ENCODE measurements at regions of chr10 and their contacts with region 1.

Region 1: GRCh38 chr10:2885288-2886278 is 181.8 kb upstream of the PFKP start:
- DNase-seq: no peak
- H3K4me3 ChIP-seq: no peak overlapping the region
- H3K27ac ChIP-seq: no peak overlapping the region
- H3K4me1 ChIP-seq: no peaks in the 10 kb centered on the region
- H3K27me3 ChIP-seq: no peaks in the 10 kb centered on the region
- CTCF ChIP-seq: no peak
- EP300 ChIP-seq: no peak
- POLR2A ChIP-seq: no peak
- RAD21 ChIP-seq: no peak

Region 2: GRCh38 chr10:2844925-2845324 is 40.7 kb before region 1 on chr10:
- CTCF ChIA-PET with region 1: no interaction called
- POLR2A ChIA-PET with region 1: no interaction called
- DNase-seq: no peak
- H3K4me3 ChIP-seq: no peak overlapping the region
- H3K27ac ChIP-seq: no peak overlapping the region
- H3K4me1 ChIP-seq: no peaks in the 10 kb centered on the region
- H3K27me3 ChIP-seq: 0 out of 7 replicates have a peak, but pooled peaks cover 0 to 2% (median 0%) of the 10 kb centered on the region in 4 experiments
- CTCF ChIP-seq: no peak
- EP300 ChIP-seq: no peak
- POLR2A ChIP-seq: no peak
- RAD21 ChIP-seq: no peak

Region 3: GRCh38 chr10:2870654-2871053 is 14.9 kb before region 1 on chr10:
- CTCF ChIA-PET with region 1: no interaction called
- POLR2A ChIA-PET with region 1: no interaction called
- DNase-seq: no peak
- H3K4me3 ChIP-seq: no peak overlapping the region
- H3K27ac ChIP-seq: no peak overlapping the region
- H3K4me1 ChIP-seq: peaks cover 0 to 8% (median 3%) of the 10 kb centered on the region in 4 experiments; a peak in 3 of 7 replicates
- H3K27me3 ChIP-seq: no peaks in the 10 kb centered on the region
- CTCF ChIP-seq: no peak
- EP300 ChIP-seq: no peak
- POLR2A ChIP-seq: no peak
- RAD21 ChIP-seq: no peak

Region 4: DNA sequence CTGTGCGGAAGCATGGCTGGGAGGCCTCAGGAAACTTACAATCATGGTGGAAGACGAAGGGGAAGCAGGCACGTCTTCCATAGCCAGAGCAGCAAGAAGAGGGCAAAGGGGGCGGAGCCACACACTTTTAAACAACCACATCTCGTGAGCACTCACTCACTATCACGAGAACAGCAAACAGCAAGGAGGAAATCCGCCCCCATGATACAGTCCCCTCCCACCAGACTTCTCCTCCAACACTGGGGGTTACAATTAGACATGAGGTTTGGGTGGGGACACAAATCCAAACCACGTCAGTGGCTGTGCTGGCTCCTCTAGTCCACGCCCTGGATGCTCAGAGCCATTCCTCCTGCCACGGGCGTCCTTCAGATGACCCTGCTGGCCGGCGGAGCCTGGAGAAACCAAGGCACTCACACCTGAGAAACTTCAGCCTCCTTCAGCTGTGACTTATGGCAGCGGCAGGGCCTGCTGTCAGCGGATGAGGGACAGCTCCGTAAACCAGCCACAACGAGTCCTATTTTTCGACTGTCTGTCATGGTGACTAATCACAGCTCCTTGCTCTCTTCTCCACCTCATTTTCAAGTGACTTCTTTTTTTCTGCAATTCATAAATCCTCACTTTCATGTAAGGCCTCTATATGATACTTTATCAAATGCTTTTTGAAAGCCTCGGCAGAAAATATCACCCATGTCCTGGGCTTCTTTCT is 13.8 kb after region 1 on chr10:
- CTCF ChIA-PET with region 1: interaction called, 14 read pairs
- POLR2A ChIA-PET with region 1: no interaction called
- DNase-seq: peak in 1 of 2 experiments; percentile 30
- H3K4me3 ChIP-seq: no peak overlapping the region
- H3K27ac ChIP-seq: no peak overlapping the region
- H3K4me1 ChIP-seq: peaks cover 0 to 3% (median 0%) of the 10 kb centered on the region in 4 experiments; a peak in 2 of 7 replicates
- H3K27me3 ChIP-seq: no peaks in the 10 kb centered on the region
- CTCF ChIP-seq: no peak
- EP300 ChIP-seq: no peak
- POLR2A ChIP-seq: no peak
- RAD21 ChIP-seq: no peak

Region 5: GRCh38 chr10:2909921-2910320 is 24.3 kb after region 1 on chr10:
- CTCF ChIA-PET with region 1: no interaction called
- POLR2A ChIA-PET with region 1: no interaction called
- DNase-seq: no peak
- H3K4me3 ChIP-seq: no peak overlapping the region
- H3K27ac ChIP-seq: no peak overlapping the region
- H3K4me1 ChIP-seq: no peaks in the 10 kb centered on the region; a peak in 2 of 7 replicates
- H3K27me3 ChIP-seq: no peaks in the 10 kb centered on the region
- CTCF ChIP-seq: no peak
- EP300 ChIP-seq: no peak
- POLR2A ChIP-seq: no peak
- RAD21 ChIP-seq: no peak

Measured in H1 (cell line).